ENCODE measurements at regions of chrX and their contacts with region 1.

Region 1: DNA sequence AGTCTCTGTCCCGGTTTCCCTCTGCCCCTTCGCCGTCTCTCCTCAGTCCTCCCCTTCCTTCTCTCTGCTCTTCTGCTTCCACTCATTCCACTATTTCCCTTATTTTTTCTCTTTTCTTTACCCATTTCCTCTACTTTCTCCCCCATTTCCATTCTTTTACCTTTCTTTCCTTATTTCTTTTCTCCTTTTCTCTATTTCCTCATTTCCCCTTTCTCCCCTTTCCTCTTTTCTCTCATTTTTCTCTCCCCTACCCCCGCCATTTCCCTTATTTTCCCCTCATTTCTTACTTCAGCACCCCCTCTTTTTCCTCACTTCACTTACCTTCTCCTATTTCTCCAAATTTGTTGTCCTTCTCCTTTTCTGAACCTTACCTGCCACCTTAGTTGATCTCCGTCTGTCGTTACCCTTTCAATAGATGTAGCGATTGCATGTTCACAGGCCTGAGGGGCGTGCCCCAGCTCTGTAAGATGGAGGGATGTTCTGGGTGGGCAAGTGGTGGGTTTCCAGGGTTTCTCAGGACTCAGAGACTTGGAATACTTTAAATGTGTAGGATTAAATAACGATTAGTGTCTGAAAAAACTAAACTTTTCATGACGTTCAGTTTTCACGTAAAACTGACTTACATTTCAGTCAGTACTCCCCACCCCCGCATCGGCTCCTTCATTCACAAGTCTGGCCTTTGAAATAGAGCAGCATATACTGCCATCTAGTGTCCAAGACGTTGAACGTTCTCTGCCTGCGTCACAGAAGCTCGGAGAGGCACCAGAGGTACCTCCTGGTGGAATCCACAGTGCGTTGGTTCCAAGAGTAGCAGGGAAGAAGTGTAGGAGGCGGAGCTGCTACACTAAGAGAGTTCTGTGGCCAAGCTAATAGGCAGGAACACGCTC is 641 bp upstream of the NCBP2L start:
- DNase-seq: peak; percentile 83 to 85 (median 84)
- H3K4me3 ChIP-seq: peak overlapping the region; percentile 47 to 48
- H3K4me3 Mint-ChIP-seq: peak overlapping the region; percentile 86 to 98 (median 92)
- H3K27ac ChIP-seq: peak overlapping the region; percentile 52
- H3K27ac Mint-ChIP-seq: peak overlapping the region; percentile 81 to 96 (median 93)
- H3K4me1 ChIP-seq: peaks cover 21% of the 10 kb centered on the region
- H3K4me1 Mint-ChIP-seq: peaks cover 5 to 27% (median 14%) of the 10 kb centered on the region in 4 donors
- H3K27me3 ChIP-seq: no peaks in the 10 kb centered on the region
- H3K27me3 Mint-ChIP-seq: no peaks in the 10 kb centered on the region

Region 2: GRCh38 chrX:107537815-107538214 is 239.1 kb before region 1 on chrX:
- CTCF ChIA-PET with region 1: interaction called, 5 read pairs
- POLR2A ChIA-PET with region 1: no interaction called
- intact Hi-C with region 1: loop called (anchors 1 kb)
- DNase-seq: peak; percentile 19 to 28 (median 23)
- H3K4me3 ChIP-seq: no peak overlapping the region
- H3K4me3 Mint-ChIP-seq: no peak overlapping the region
- H3K27ac ChIP-seq: no peak overlapping the region
- H3K27ac Mint-ChIP-seq: no peak overlapping the region
- H3K4me1 ChIP-seq: no peaks in the 10 kb centered on the region
- H3K4me1 Mint-ChIP-seq: no peaks in the 10 kb centered on the region
- H3K27me3 ChIP-seq: no peaks in the 10 kb centered on the region
- H3K27me3 Mint-ChIP-seq: peaks cover 2 to 7% of the 10 kb centered on the region in 2 donors

Region 3: GRCh38 chrX:107654872-107655761 is 121.8 kb before region 1 on chrX:
- CTCF ChIA-PET with region 1: interaction called, 245 read pairs
- POLR2A ChIA-PET with region 1: interaction called, 28 read pairs
- intact Hi-C with region 1: loop called (anchors 1 kb)
- DNase-seq: peak; percentile 64 to 71 (median 67)
- H3K4me3 ChIP-seq: no peak overlapping the region
- H3K4me3 Mint-ChIP-seq: peak overlapping the region in 2 of 8 donors; percentile 2 to 9
- H3K27ac ChIP-seq: no peak overlapping the region
- H3K27ac Mint-ChIP-seq: peak overlapping the region in 5 of 7 donors; percentile 47 to 82 (median 57)
- H3K4me1 ChIP-seq: peaks cover 12% of the 10 kb centered on the region
- H3K4me1 Mint-ChIP-seq: peaks cover 11 to 15% (median 14%) of the 10 kb centered on the region in 4 donors
- H3K27me3 ChIP-seq: no peaks in the 10 kb centered on the region
- H3K27me3 Mint-ChIP-seq: no peaks in the 10 kb centered on the region

Region 4: DNA sequence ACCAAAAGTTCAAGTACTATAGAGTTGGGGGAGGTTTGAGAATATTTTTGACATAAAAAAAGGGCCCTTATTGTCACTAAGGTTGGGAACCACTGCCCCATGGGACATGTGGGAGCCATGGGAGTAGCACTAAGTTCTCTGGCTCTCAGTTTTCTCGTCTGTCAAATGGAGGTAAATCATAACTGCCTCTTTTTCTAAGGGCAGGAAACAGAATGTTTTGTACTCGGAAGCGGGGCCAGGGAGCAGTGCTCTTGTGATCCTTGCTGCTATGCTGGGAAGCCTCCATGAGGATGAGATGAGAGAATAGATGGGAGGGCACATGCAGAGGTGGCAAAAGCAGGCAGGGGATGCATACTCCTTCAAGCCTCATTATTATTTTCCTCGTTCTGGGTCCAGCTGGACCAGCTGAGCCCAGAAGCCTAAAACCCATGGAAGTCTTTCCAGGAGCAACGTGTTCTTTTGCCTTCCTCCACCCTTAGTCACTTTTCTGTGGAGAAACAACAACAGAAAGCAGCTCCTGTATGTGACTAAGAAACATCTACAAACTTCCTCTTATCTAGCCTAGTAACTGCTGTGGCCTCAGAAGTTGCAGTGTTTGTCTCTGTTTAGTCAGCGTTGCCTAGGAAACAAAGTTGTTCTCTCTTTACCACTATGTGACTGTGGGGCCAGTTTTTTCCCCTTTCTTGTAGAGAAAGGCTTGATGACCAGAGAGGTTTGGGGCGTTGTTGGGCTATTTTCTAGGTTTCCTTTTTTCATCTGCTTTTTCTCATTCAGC is 66.1 kb before region 1 on chrX:
- CTCF ChIA-PET with region 1: interaction called, 81 read pairs
- POLR2A ChIA-PET with region 1: interaction called, 91 read pairs
- intact Hi-C with region 1: no loop called
- DNase-seq: peak; percentile 89 to 93 (median 91)
- H3K4me3 ChIP-seq: peak overlapping the region; percentile 29 to 46
- H3K4me3 Mint-ChIP-seq: peak overlapping the region; percentile 75 to 96 (median 86)
- H3K27ac ChIP-seq: peak overlapping the region; percentile 95
- H3K27ac Mint-ChIP-seq: peak overlapping the region; percentile 99 to 100 (median 100)
- H3K4me1 ChIP-seq: peaks cover 65% of the 10 kb centered on the region
- H3K4me1 Mint-ChIP-seq: peaks cover 36 to 82% (median 60%) of the 10 kb centered on the region in 4 donors
- H3K27me3 ChIP-seq: no peaks in the 10 kb centered on the region
- H3K27me3 Mint-ChIP-seq: no peaks in the 10 kb centered on the region

Region 5: DNA sequence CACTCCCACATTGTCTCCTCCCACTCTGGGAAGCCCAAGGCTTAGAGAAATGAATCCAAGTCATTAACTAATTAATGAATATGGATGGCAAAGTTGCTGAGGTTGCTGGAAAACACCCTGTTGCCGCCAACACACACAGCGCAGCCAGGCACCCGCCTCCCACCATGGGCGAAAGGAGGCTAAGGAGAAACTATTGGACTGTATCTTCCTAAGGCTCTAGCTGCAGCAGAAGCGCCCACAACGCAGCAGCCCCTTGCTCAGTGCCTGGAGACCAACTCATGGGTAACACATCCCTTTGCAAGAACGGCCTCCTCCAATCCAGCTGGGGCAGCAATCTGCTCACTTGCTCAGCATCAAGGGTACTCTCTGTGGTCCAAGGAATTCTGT is 35.5 kb before region 1 on chrX:
- CTCF ChIA-PET with region 1: interaction called, 23 read pairs
- POLR2A ChIA-PET with region 1: interaction called, 46 read pairs
- intact Hi-C with region 1: loop called (anchors 1 kb)
- DNase-seq: peak in 1 of 5 donors; percentile 43
- H3K4me3 ChIP-seq: peak overlapping the region in 1 of 2 donors; percentile 41
- H3K4me3 Mint-ChIP-seq: peak overlapping the region; percentile 64 to 95 (median 85)
- H3K27ac ChIP-seq: peak overlapping the region; percentile 52
- H3K27ac Mint-ChIP-seq: peak overlapping the region; percentile 95 to 100 (median 98)
- H3K4me1 ChIP-seq: peaks cover 48% of the 10 kb centered on the region
- H3K4me1 Mint-ChIP-seq: peaks cover 23 to 49% (median 33%) of the 10 kb centered on the region in 4 donors
- H3K27me3 ChIP-seq: no peaks in the 10 kb centered on the region
- H3K27me3 Mint-ChIP-seq: peaks cover 0 to 4% of the 10 kb centered on the region in 2 donors

Region 6: GRCh38 chrX:107894038-107894437 is 117.1 kb after region 1 on chrX:
- CTCF ChIA-PET with region 1: interaction called, 4 read pairs
- POLR2A ChIA-PET with region 1: no interaction called
- intact Hi-C with region 1: loop called (anchors 1 kb)
- DNase-seq: peak; percentile 25 to 69 (median 65)
- H3K4me3 ChIP-seq: no peak overlapping the region
- H3K4me3 Mint-ChIP-seq: no peak overlapping the region
- H3K27ac ChIP-seq: no peak overlapping the region
- H3K27ac Mint-ChIP-seq: peak overlapping the region in 2 of 7 donors; percentile 32 to 76
- H3K4me1 ChIP-seq: no peaks in the 10 kb centered on the region
- H3K4me1 Mint-ChIP-seq: peaks cover 2 to 10% (median 3%) of the 10 kb centered on the region in 4 donors
- H3K27me3 ChIP-seq: no peaks in the 10 kb centered on the region
- H3K27me3 Mint-ChIP-seq: no peaks in the 10 kb centered on the region

Measured in CD4-positive, alpha-beta memory T cell (primary cell).